Common myeloid progenitor, CD34-positive (primary cell): ENCODE measurements at regions of chr16 and their contacts with region 1.

Region 1: GRCh38 chr16:67816240-67817031 is 9.7 kb downstream of the TSNAXIP1 start:
- DNase-seq: peak; percentile 81 to 91 (median 91)
- H3K4me3 ChIP-seq: no peak overlapping the region
- H3K27ac ChIP-seq: no peak overlapping the region
- H3K4me1 ChIP-seq: no peaks in the 10 kb centered on the region
- H3K27me3 ChIP-seq: no peaks in the 10 kb centered on the region

Region 2: DNA sequence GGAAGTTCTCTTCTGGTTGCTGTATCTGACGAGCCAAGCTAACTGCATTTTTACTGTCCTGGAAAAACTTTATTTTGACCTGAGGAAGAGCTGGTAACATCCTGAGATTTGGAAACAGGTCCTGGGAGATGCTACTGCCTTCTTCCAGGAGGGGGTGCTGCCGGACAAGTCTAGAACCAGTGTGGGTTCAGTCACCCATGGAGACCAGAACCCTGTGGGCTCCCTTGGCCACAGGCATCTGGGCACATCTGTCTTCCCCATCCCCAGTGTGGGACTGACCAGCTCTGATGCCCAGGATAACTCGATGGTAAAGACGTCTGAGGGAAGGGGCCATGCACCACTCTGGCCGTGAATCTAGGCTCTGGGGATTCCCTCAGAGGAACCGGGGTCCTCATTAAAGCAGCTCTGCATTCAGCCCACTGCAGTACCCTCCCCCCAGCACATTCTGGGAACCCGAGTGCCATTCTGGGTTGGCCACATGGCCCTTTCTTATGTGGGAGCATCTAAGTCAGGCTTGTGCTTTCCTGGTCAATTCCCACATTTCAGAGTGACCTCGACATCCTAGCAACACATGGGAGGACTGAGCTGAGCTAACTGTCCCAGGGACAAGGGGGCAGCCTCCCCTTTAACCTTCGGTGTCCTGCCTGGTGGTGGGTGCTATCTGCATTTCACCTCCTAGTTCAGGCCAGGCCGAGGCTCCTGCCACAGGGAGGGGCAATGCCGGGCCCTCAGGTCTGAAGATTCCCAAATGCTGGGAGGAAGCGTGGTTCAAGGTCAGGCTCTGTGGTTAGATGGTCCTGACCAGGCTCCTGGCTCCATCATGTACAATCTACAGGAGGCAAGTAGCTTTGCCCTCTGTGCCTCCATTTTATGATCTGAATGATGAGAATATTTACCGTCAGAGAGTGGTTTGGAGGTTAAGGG is 143.4 kb before region 1 on chr16:
- CTCF ChIA-PET with region 1: interaction called, 24 read pairs
- POLR2A ChIA-PET with region 1: no interaction called
- DNase-seq: peak; percentile 70 to 83 (median 79)
- H3K4me3 ChIP-seq: peak overlapping the region in 1 of 7 experiments; percentile 36
- H3K27ac ChIP-seq: peak overlapping the region in 1 of 2 experiments; percentile 62
- H3K4me1 ChIP-seq: peaks cover 6 to 37% (median 32%) of the 10 kb centered on the region in 4 experiments
- H3K27me3 ChIP-seq: no peaks in the 10 kb centered on the region

Region 3: GRCh38 chr16:67800338-67800926 is 16.0 kb before region 1 on chr16:
- CTCF ChIA-PET with region 1: interaction called, 12 read pairs
- POLR2A ChIA-PET with region 1: no interaction called
- DNase-seq: peak in 2 of 3 donors; percentile 46 to 64
- H3K4me3 ChIP-seq: no peak overlapping the region
- H3K27ac ChIP-seq: peak overlapping the region in 1 of 2 experiments; percentile 36
- H3K4me1 ChIP-seq: peaks cover 7 to 24% (median 11%) of the 10 kb centered on the region in 4 experiments
- H3K27me3 ChIP-seq: no peaks in the 10 kb centered on the region

Region 4: GRCh38 chr16:67846320-67847063 is 30.1 kb after region 1 on chr16 and contains the start of gene NUTF2:
- CTCF ChIA-PET with region 1: interaction called, 22 read pairs
- POLR2A ChIA-PET with region 1: no interaction called
- DNase-seq: peak; percentile 93 to 97 (median 97)
- H3K4me3 ChIP-seq: peak within 1 kb of the TSS; percentile 81 to 97 (median 93)
- H3K27ac ChIP-seq: peak within 1 kb of the TSS; percentile 84 to 94
- H3K4me1 ChIP-seq: peaks cover 23 to 55% (median 50%) of the 10 kb centered on the region in 4 experiments
- H3K27me3 ChIP-seq: no peaks in the 10 kb centered on the region

Region 5: GRCh38 chr16:67883872-67884261 is 67.4 kb after region 1 on chr16:
- CTCF ChIA-PET with region 1: interaction called, 12 read pairs
- POLR2A ChIA-PET with region 1: no interaction called
- DNase-seq: peak; percentile 50 to 70 (median 66)
- H3K4me3 ChIP-seq: no peak overlapping the region
- H3K27ac ChIP-seq: no peak overlapping the region
- H3K4me1 ChIP-seq: no peaks in the 10 kb centered on the region
- H3K27me3 ChIP-seq: no peaks in the 10 kb centered on the region